ENCODE measurements at regions of chr15 and their contacts with region 1.

Region 1: GRCh38 chr15:35751413-35752133 is 205.6 kb upstream of the DPH6 start:
- DNase-seq: peak; percentile 85
- H3K4me3 ChIP-seq: no peak overlapping the region
- H3K27ac ChIP-seq: no peak overlapping the region
- H3K4me1 ChIP-seq: peaks cover 3% of the 10 kb centered on the region
- H3K27me3 ChIP-seq: no peaks in the 10 kb centered on the region
- CTCF ChIP-seq: peak; percentile 73 to 77
- POLR2A ChIP-seq: no peak

Region 2: DNA sequence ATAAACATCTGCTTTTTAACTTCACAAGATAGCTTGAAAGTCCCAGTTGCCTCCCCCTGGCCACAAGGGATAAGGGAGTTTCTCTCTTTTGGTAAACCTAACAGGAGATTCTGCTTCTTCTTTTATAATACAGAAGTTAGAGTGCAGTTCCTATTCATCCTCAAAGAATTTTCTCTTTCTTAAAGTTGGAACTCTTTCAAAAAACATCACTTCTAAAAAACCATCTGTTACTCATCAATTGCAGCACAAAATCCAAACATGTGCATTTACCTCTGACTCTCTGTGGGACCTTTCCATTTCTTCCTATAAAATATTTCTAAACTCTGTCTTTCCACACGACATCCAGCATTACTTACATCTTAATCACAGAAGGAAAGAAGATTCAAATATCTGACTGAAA is 210.7 kb before region 1 on chr15:
- CTCF ChIA-PET with region 1: interaction called, 7 read pairs
- POLR2A ChIA-PET with region 1: no interaction called
- dilution Hi-C with region 1: no loop called
- intact Hi-C with region 1: loop called (anchors 5 kb)
- DNase-seq: no peak
- H3K4me3 ChIP-seq: no peak overlapping the region
- H3K27ac ChIP-seq: no peak overlapping the region
- H3K4me1 ChIP-seq: peaks cover 10% of the 10 kb centered on the region
- H3K27me3 ChIP-seq: no peaks in the 10 kb centered on the region
- CTCF ChIP-seq: no peak
- POLR2A ChIP-seq: no peak

Region 3: DNA sequence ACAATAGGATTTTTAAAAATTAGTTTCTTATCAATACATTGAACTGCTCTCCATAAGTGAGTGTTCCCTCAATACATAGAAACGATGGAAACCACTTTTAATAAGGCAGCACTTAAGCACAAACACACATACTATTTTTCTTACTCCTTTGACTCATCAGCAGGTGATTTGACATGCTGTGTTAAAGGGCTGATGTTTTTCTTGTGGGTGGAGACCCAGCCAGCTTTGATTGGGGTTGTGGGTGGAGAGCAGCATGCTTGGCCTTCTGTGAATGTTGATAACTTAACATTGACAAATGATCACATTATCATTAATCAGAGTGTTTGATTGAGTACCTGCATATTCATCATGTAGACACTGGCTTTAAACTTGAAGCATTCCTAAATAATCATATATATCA is 17.4 kb after region 1 on chr15:
- CTCF ChIA-PET with region 1: interaction called, 14 read pairs
- POLR2A ChIA-PET with region 1: no interaction called
- dilution Hi-C with region 1: no loop called
- intact Hi-C with region 1: no loop called
- DNase-seq: no peak
- H3K4me3 ChIP-seq: no peak overlapping the region
- H3K27ac ChIP-seq: no peak overlapping the region
- H3K4me1 ChIP-seq: no peaks in the 10 kb centered on the region
- H3K27me3 ChIP-seq: no peaks in the 10 kb centered on the region
- CTCF ChIP-seq: no peak
- POLR2A ChIP-seq: no peak

Region 4: GRCh38 chr15:35857567-35858226 is 106.1 kb after region 1 on chr15:
- CTCF ChIA-PET with region 1: no interaction called
- POLR2A ChIA-PET with region 1: no interaction called
- dilution Hi-C with region 1: no loop called
- intact Hi-C with region 1: no loop called
- DNase-seq: no peak
- H3K4me3 ChIP-seq: no peak overlapping the region
- H3K27ac ChIP-seq: no peak overlapping the region
- H3K4me1 ChIP-seq: no peaks in the 10 kb centered on the region
- H3K27me3 ChIP-seq: no peaks in the 10 kb centered on the region
- CTCF ChIP-seq: no peak
- POLR2A ChIP-seq: no peak

Region 5: DNA sequence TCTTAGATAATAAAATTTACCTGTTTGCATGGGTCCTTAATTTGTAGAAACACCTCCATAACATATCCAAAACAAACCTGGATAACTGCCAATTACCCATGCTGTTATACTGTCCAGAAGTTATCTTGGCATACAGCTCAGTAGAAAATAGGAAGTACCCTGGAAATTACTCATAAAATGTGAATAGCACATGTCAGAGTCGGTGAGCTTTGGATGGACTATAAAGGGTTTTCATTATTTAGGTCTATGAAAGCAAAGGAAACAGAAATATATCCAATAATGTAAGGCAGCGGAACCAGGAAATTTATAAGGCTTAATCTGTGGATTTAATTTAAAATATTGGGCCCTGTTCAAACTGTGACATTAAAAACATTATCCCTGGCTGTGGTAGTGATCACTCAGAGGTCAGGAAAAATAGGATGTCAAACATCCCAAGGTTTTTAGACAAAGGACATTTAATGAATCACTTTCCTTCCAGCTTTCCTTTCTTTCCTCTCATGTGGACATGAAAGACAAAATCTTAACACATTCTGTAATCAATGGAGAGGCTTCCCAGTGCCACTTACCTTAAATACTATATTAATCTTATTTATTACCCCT is 253.4 kb after region 1 on chr15:
- CTCF ChIA-PET with region 1: interaction called, 12 read pairs
- POLR2A ChIA-PET with region 1: no interaction called
- dilution Hi-C with region 1: no loop called
- intact Hi-C with region 1: loop called (anchors 1 kb)
- DNase-seq: peak; percentile 87
- H3K4me3 ChIP-seq: peak overlapping the region in 1 of 3 experiments; percentile 33
- H3K27ac ChIP-seq: peak overlapping the region; percentile 91
- H3K4me1 ChIP-seq: peaks cover 29% of the 10 kb centered on the region
- H3K27me3 ChIP-seq: no peaks in the 10 kb centered on the region
- CTCF ChIP-seq: no peak
- POLR2A ChIP-seq: no peak

Region 6: GRCh38 chr15:36883713-36884517 is 1132.3 kb after region 1 on chr15:
- CTCF ChIA-PET with region 1: interaction called, 7 read pairs
- POLR2A ChIA-PET with region 1: no interaction called
- dilution Hi-C with region 1: no loop called
- intact Hi-C with region 1: loop called (anchors 5 kb)
- DNase-seq: peak; percentile 79
- H3K4me3 ChIP-seq: no peak overlapping the region
- H3K27ac ChIP-seq: no peak overlapping the region
- H3K4me1 ChIP-seq: peaks cover 11% of the 10 kb centered on the region
- H3K27me3 ChIP-seq: peaks cover 90 to 99% of the 10 kb centered on the region in 2 experiments
- CTCF ChIP-seq: peak; percentile 72 to 91
- POLR2A ChIP-seq: no peak